Calu3 (cell line): ENCODE measurements at regions of chr9 and their contacts with region 1.

Region 1: GRCh38 chr9:112203536-112203935 is 28.4 kb upstream of the SUSD1 start:
- DNase-seq: no peak
- H3K4me3 Mint-ChIP-seq: no peak overlapping the region
- H3K27ac Mint-ChIP-seq: no peak overlapping the region
- H3K4me1 Mint-ChIP-seq: no peaks in the 10 kb centered on the region
- H3K27me3 Mint-ChIP-seq: no peaks in the 10 kb centered on the region
- CTCF ChIP-seq: no peak

Region 2: DNA sequence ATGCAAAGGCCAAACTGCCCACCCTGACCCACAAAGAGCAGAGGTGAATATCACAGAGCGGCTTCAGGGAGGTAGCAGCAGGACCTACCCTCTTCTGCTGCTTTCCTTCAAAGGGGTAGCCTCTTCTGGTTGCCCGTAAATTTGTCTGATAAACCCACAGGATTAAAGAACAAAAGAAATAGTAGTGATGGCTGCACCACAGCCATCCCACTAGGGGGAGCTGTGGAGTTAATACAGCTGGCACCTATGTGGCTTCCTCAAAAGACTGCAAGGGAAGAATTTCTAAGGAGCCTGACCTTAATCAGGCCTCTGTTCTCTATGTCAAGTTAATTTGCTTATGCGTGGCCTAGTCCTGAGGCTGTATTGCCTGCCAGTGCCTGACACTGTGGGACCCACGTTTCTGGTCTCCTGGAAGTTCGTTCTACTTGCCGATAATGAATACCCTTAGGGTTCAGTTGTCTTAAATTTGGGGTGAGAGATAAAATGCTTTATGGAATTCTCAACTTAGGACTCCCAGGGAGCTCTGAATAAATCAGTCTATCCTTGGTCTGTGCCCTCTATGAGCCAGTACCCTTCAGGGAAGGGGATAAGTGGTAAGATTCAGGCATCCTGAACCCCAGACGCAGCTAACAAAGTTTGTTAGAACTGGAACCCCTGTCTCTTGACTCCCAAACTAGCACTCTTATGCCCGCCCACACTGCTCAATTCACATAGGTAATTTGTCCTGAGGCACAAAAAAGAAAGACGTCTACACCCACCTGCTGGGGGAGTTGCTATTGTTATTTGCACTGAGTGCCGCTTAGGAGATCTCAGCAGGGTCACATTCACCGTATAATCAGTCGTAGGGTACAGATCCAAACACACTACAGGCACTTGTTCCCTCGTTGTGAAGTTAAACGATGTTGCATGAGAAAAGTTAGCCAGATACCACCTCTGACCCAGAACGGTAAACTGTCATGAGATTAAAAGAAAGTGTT is 105.5 kb before region 1 on chr9:
- CTCF ChIA-PET with region 1: no interaction called
- intact Hi-C with region 1: loop called (anchors 10 kb)
- DNase-seq: peak; percentile 78
- H3K4me3 Mint-ChIP-seq: no peak overlapping the region
- H3K27ac Mint-ChIP-seq: no peak overlapping the region
- H3K4me1 Mint-ChIP-seq: peaks cover 10% of the 10 kb centered on the region
- H3K27me3 Mint-ChIP-seq: no peaks in the 10 kb centered on the region
- CTCF ChIP-seq: peak; percentile 57

Region 3: GRCh38 chr9:112252194-112252593 is 48.7 kb after region 1 on chr9:
- CTCF ChIA-PET with region 1: no interaction called
- intact Hi-C with region 1: no loop called
- DNase-seq: no peak
- H3K4me3 Mint-ChIP-seq: no peak overlapping the region
- H3K27ac Mint-ChIP-seq: no peak overlapping the region
- H3K4me1 Mint-ChIP-seq: peaks cover 20% of the 10 kb centered on the region
- H3K27me3 Mint-ChIP-seq: no peaks in the 10 kb centered on the region
- CTCF ChIP-seq: no peak

Region 4: DNA sequence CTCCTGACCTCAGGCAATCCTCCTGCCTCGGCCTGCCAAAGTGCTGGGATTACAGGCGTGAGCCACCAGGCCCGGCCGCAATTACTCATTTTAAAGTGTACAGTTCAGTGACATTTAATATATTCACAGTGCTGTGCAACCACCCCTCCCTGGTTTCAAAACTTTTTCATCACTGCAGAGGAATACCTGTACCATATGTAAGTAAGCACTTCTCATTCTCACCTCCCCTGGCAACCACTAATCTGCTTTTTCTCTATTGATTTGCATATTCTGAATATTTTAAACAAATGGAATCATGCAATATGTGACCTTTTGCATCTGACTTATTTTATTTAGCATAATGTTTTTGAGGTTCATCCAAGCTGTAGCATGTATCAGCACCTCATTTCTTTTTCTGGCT is 261.8 kb after region 1 on chr9:
- CTCF ChIA-PET with region 1: no interaction called
- intact Hi-C with region 1: no loop called
- DNase-seq: no peak
- H3K4me3 Mint-ChIP-seq: no peak overlapping the region
- H3K27ac Mint-ChIP-seq: no peak overlapping the region
- H3K4me1 Mint-ChIP-seq: no peaks in the 10 kb centered on the region
- H3K27me3 Mint-ChIP-seq: no peaks in the 10 kb centered on the region
- CTCF ChIP-seq: no peak